ENCODE measurements at regions of chr19 and their contacts with region 1.

Region 1: GRCh38 chr19:47713046-47714021 is at the start of gene EHD2:
- DNase-seq: no peak
- H3K4me3 ChIP-seq: peak within 1 kb of the TSS; percentile 95
- CTCF ChIP-seq: peak; percentile 90

Region 2: GRCh38 chr19:47613165-47614020 is 99.9 kb before region 1 on chr19:
- CTCF ChIA-PET with region 1: no interaction called
- POLR2A ChIA-PET with region 1: no interaction called
- DNase-seq: no peak
- H3K4me3 ChIP-seq: peak overlapping the region; percentile 29
- CTCF ChIP-seq: no peak

Region 3: GRCh38 chr19:47729992-47730889 is 16.9 kb after region 1 on chr19:
- CTCF ChIA-PET with region 1: interaction called, 17 read pairs
- POLR2A ChIA-PET with region 1: interaction called, 9 read pairs
- DNase-seq: no peak
- H3K4me3 ChIP-seq: no peak overlapping the region
- CTCF ChIP-seq: no peak

Region 4: GRCh38 chr19:47756953-47757608 is 43.7 kb after region 1 on chr19:
- CTCF ChIA-PET with region 1: interaction called, 15 read pairs
- POLR2A ChIA-PET with region 1: interaction called, 4 read pairs
- DNase-seq: no peak
- H3K4me3 ChIP-seq: no peak overlapping the region
- CTCF ChIP-seq: no peak

Region 5: GRCh38 chr19:47778089-47778953 is 65.0 kb after region 1 on chr19 and contains the start of gene SELENOW:
- CTCF ChIA-PET with region 1: interaction called, 10 read pairs
- POLR2A ChIA-PET with region 1: interaction called, 3 read pairs
- DNase-seq: no peak
- H3K4me3 ChIP-seq: peak within 1 kb of the TSS; percentile 96
- CTCF ChIP-seq: no peak

Measured in AG04449 (cell line).